ENCODE measurements at regions of chr14 and their contacts with region 1.

Region 1: DNA sequence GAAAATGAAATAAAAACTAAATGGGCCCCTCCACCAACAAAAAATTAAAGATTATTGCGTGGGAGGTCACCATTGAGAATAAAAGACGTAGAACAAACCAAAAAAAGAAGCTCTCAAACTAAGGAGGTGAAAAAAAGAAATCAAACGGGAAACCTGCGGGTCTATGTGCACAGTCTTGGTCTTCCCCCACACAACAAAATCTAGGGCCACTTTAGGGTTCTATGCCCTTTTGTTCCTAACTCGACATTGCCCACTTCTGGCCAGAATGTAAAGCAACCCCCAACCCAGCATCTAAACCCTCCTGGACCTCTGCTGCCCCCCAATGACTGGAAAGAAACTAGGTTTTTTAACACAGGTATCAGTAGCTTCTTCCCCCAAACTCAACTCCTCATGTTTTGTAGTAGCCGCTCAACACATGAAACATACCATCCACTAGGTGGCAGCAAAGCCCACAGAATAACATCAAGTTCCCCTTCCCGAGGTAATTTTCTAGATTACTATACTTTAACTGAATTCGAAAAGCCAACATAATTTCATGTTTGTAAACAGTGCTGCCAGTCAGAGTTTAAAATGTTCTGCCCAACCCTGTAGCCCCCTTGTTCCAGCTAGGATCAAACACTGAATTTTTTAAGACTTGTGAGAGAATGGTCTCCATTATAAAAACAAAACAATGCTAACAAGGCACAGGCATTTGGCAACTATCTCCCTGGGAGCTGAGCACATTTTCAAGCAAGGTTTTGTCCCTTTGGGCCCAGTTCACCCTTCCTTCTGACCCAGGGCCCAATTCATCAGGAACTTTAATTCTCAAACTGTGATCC is 18.7 kb downstream of the DAD1 start:
- DNase-seq: peak; percentile 64
- ATAC-seq: peak; percentile 85
- H3K4me3 Mint-ChIP-seq: peak overlapping the region; percentile 93
- H3K27ac Mint-ChIP-seq: peak overlapping the region; percentile 96
- H3K4me1 Mint-ChIP-seq: peaks cover 50% of the 10 kb centered on the region
- H3K27me3 Mint-ChIP-seq: no peaks in the 10 kb centered on the region

Region 2: GRCh38 chr14:21997300-21997699 is 573.0 kb before region 1 on chr14:
- POLR2A ChIA-PET with region 1: interaction called, 12 read pairs
- DNase-seq: no peak
- ATAC-seq: peak; percentile 88
- H3K4me3 Mint-ChIP-seq: peak overlapping the region; percentile 96
- H3K27ac Mint-ChIP-seq: peak overlapping the region; percentile 96
- H3K4me1 Mint-ChIP-seq: peaks cover 17% of the 10 kb centered on the region
- H3K27me3 Mint-ChIP-seq: no peaks in the 10 kb centered on the region

Region 3: DNA sequence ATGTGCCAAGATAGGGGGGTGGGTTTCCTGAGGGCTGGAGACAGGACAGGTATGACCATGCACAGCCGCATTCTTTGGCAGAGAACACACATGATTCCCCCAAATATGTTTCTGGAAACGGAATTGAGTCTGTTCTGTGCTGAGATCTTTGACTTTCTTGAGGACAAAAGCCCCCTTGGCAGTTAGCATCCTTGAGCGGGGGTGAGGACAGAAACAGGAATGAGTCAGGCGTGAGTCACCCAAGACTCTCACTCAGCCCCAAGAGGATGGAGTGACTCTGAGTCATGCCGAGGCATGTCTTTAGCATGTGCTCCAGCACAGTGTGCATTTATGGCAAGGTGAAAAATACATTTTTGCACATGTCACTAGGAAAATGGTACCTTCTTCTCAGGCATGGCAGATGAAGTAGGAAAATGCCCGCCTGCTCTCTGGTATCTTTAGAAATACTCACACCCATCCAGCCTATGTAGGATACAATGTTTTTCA is 33.4 kb before region 1 on chr14:
- POLR2A ChIA-PET with region 1: interaction called, 315 read pairs
- DNase-seq: no peak
- ATAC-seq: peak; percentile 83
- H3K4me3 Mint-ChIP-seq: peak overlapping the region; percentile 86
- H3K27ac Mint-ChIP-seq: peak overlapping the region; percentile 99
- H3K4me1 Mint-ChIP-seq: peaks cover 91% of the 10 kb centered on the region
- H3K27me3 Mint-ChIP-seq: no peaks in the 10 kb centered on the region

Region 4: GRCh38 chr14:22589096-22589839 is 18.9 kb after region 1 on chr14 and contains the start of gene DAD1:
- POLR2A ChIA-PET with region 1: interaction called, 49 read pairs
- DNase-seq: peak; percentile 100
- ATAC-seq: peak; percentile 93
- H3K4me3 Mint-ChIP-seq: peak within 1 kb of the TSS; percentile 90
- H3K27ac Mint-ChIP-seq: peak within 1 kb of the TSS; percentile 100
- H3K4me1 Mint-ChIP-seq: peaks cover 44% of the 10 kb centered on the region
- H3K27me3 Mint-ChIP-seq: no peaks in the 10 kb centered on the region
- total RNA-seq, gene DAD1: 124 to 148 TPM

Region 5: GRCh38 chr14:22852940-22853767 is 282.8 kb after region 1 on chr14:
- POLR2A ChIA-PET with region 1: interaction called, 11 read pairs
- DNase-seq: peak; percentile 95
- ATAC-seq: peak; percentile 82
- H3K4me3 Mint-ChIP-seq: peak overlapping the region; percentile 82
- H3K27ac Mint-ChIP-seq: peak overlapping the region; percentile 80
- H3K4me1 Mint-ChIP-seq: peaks cover 30% of the 10 kb centered on the region
- H3K27me3 Mint-ChIP-seq: peaks cover 35% of the 10 kb centered on the region